Posterior cingulate gyrus (tissue), 11 donors: ENCODE measurements at regions of chr10 and their contacts with region 1.

Region 1: GRCh38 chr10:62804356-62805230 is at the start of gene ADO:
- DNase-seq: peak; percentile 84 to 99 (median 92)

Region 2: DNA sequence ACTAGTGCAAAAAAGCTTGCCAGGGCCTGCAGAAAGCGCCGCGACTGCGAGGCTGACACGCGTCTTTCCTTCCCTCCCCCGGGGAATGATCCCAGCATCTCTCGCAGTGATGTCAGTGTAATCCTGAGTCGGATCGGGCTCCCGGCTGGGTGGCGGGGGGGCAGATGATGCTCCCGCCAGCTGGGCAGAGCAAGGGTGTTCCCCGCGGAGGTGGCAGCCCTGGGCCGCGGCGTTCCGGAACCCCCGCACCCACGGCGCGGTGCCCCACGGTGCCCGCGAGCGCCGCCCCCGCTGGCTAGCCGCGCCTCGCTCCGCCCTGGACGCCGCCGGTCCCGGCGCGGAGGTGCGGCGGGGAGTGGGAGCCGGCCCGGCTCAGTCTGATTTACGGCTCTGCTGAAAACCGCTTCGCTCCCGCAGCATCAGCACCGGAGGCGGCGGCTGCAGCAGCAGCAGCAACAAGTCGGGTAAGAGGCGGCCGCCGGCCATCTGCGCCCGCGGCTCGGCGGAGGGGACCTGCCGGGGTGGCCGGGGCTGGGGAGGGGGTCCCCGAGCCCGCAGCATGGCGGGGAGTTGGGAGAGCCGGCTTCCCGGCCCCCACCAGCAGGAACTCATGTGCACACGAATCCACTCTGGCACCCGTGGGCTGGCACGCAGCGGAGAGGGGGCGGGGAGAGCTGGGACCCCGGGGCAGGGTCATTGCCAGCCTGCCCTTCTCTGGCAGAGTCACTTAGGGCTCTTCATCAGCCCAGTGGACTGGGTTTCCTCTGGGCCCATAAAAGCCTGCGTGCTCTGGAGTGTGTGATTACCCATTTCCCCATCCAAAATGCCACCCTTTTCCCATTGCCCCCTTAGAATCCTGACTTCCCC is 430.4 kb before region 1 on chr10 and contains the start of gene ZNF365:
- intact Hi-C with region 1: loop called (anchors 10 kb)
- DNase-seq: peak; percentile 68 to 98 (median 79)

Region 3: DNA sequence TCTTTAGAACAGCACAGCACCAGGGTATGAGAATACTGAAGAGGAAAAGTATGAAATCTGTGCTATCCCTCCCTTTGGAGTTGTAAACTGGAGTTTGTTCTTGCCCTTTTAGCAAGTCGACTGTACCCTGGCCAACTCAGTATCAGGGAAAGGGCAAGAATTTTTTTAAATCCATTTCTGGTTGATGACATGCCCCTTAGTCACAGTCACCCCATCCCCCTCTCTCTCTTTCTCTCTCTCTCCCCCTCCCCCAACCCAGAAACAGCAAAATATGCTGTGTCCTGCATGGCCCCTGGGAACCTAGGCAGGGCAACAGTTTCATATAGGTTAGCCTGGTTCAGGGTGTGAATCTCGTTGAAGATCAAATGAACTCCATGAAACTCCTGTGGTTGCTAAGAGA is 177.8 kb before region 1 on chr10:
- intact Hi-C with region 1: no loop called
- DNase-seq: no peak

Region 4: GRCh38 chr10:63003816-63004453 is 199.3 kb after region 1 on chr10:
- intact Hi-C with region 1: no loop called
- DNase-seq: no peak

Region 5: DNA sequence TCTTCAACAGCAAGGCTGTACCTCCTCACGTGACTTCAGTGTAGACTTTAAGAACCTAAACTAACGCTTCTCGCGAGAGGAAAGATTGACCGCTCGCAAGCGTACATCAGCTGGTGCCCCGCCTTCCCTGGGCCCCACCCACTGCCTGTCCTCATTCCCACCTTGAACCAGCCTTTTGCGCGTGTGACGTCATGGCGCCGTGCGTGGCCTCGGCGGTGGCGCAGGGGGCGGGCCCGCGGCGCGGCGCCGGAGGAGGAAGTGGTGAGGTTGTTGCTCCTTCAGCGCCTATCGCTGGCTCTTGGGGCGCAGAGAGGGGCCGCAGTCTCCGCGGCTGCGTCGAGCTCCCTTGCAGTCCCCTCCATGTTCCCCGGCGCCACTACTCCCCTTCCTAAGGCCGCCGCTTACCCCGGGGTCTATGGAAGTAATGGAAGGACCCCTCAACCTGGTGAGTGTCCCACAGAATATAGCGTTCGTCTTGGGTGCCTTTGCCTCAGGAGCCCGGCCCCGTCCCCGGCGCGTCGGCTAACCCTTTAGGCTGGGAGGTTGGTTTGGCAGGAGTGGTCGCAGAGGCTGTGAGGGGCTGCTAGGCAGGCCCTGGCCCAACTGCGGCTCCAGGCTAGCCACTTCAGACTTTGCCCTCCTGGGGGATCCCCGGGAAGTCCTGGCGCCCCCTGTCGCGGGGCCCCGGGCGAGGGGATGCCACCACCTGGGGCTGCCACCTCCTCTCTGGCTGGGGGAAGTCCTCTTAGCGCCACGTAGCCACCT is 328.6 kb after region 1 on chr10 and contains the start of gene NRBF2:
- intact Hi-C with region 1: loop called (anchors 10 kb)
- DNase-seq: peak; percentile 84 to 99 (median 94)